Sciatic nerve (tissue), 2 donors: ENCODE measurements at regions of chr16 and their contacts with region 1.

Region 1: GRCh38 chr16:22001591-22001990 is 675 bp upstream of the PDZD9 start:
- DNase-seq: no peak
- ATAC-seq: peak; percentile 39

Region 2: GRCh38 chr16:22070361-22071330 is 69.1 kb after region 1 on chr16:
- intact Hi-C with region 1: loop called (anchors 5 kb)
- DNase-seq: no peak
- ATAC-seq: peak; percentile 67

Region 3: GRCh38 chr16:22188595-22189442 is 187.2 kb after region 1 on chr16:
- intact Hi-C with region 1: loop called (anchors 5 kb)
- DNase-seq: peak; percentile 77
- ATAC-seq: no peak